Naive thymus-derived CD4-positive, alpha-beta T cell (primary cell): ENCODE measurements at regions of chr16 and their contacts with region 1.

Region 1: GRCh38 chr16:2874912-2875362 is 8.1 kb upstream of the FLYWCH2 start:
- DNase-seq: peak in 8 of 9 donors; percentile 42 to 70 (median 48)
- ATAC-seq: peak; percentile 100
- H3K4me3 ChIP-seq: no peak overlapping the region
- H3K4me3 Mint-ChIP-seq: no peak overlapping the region
- H3K27ac ChIP-seq: no peak overlapping the region
- H3K27ac Mint-ChIP-seq: no peak overlapping the region
- H3K4me1 ChIP-seq: no peaks in the 10 kb centered on the region
- H3K4me1 Mint-ChIP-seq: no peaks in the 10 kb centered on the region
- H3K27me3 ChIP-seq: no peaks in the 10 kb centered on the region
- H3K27me3 Mint-ChIP-seq: peaks cover 0 to 9% (median 0%) of the 10 kb centered on the region in 5 donors

Region 2: DNA sequence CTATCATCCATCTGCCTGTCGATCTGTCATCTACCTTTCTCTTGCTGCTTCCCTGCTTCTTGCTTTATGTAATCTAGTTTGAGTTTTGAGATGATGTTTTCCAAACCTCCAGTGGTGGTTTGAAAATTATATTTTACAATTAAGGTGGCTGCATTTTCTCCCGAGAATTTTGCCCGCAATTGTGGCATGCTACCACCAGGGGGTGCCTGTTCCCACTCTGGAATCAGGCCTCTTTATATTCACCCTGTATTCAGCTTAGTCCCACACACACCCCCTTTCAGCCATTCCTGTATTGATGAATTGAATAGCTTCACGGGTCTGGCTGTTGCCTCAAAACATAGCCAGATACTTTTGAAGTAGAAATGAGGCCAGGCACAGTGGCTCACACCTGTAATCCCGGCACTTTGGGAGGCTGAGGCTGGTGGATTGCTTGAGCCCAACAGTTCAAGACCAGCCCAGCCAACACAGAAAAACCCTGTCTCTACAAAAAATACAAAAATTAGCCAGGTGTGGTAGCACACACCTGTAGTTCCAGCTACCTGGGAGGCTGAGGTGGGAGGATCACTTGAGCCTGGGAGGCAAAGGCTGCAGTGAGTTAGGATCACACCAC is 20.1 kb before region 1 on chr16:
- CTCF ChIA-PET with region 1: no interaction called
- POLR2A ChIA-PET with region 1: no interaction called
- intact Hi-C with region 1: no loop called
- DNase-seq: no peak
- ATAC-seq: no peak
- H3K4me3 ChIP-seq: no peak overlapping the region
- H3K4me3 Mint-ChIP-seq: no peak overlapping the region
- H3K27ac ChIP-seq: no peak overlapping the region
- H3K27ac Mint-ChIP-seq: no peak overlapping the region
- H3K4me1 ChIP-seq: peaks cover 3 to 12% of the 10 kb centered on the region in 2 donors
- H3K4me1 Mint-ChIP-seq: peaks cover 3 to 13% (median 5%) of the 10 kb centered on the region in 7 donors
- H3K27me3 ChIP-seq: peaks cover 0 to 6% of the 10 kb centered on the region in 2 donors
- H3K27me3 Mint-ChIP-seq: peaks cover 0 to 9% (median 5%) of the 10 kb centered on the region in 5 donors

Region 3: DNA sequence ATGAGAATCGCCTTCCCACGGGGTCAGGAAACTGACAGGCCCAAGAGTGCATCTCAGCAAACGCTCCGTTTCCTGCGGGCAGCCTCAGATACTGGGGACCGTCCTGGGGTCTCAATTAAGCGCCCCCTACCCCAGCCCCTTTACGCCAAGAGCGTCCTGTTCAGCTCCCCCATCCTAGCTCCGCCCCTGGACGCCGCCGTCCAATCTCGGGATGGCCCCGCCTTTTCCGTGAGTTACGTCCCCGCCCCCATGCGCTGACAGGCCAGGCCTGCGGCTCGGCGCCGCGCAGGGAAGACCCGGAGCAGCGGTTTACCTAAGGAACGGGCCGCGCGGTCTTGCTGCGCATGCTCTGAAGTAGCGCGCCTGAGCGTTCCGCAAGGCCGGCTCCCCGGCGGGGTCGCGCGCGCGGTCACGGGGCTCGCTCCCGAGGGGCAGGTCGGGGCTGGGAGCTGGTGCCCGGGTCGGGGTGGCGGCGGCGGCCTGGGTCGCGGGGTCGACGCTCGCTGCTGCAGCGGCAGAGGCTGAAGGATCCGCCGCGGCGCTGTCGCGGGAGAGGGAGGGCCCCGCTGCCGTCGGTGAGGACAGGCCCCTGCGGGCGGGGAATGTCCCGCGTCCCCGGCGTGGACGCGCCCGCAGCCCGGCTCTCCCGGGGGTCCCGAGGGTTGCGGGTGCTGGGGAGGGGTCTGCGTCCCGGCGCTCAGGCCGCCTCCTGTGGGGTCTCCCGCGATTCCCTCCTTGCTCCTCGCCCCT is 36.8 kb after region 1 on chr16 and contains the start of gene FLYWCH1:
- CTCF ChIA-PET with region 1: interaction called, 3 read pairs
- POLR2A ChIA-PET with region 1: interaction called, 3 read pairs
- intact Hi-C with region 1: loop called in 1 of 2 experiments (anchors 1 kb)
- DNase-seq: peak; percentile 94 to 99 (median 97)
- ATAC-seq: peak; percentile 99
- H3K4me3 ChIP-seq: peak within 1 kb of the TSS; percentile 85
- H3K4me3 Mint-ChIP-seq: peak within 1 kb of the TSS; percentile 80 to 97 (median 92)
- H3K27ac ChIP-seq: peak within 1 kb of the TSS; percentile 78
- H3K27ac Mint-ChIP-seq: peak within 1 kb of the TSS; percentile 80 to 96 (median 87)
- H3K4me1 ChIP-seq: peaks cover 7 to 8% of the 10 kb centered on the region in 2 donors
- H3K4me1 Mint-ChIP-seq: peaks cover 11 to 39% (median 30%) of the 10 kb centered on the region in 7 donors
- H3K27me3 ChIP-seq: no peaks in the 10 kb centered on the region
- H3K27me3 Mint-ChIP-seq: peaks cover 0 to 10% (median 0%) of the 10 kb centered on the region in 5 donors
- total RNA-seq, gene FLYWCH1: 48.6 to 149 (median 87.0) TPM

Region 4: GRCh38 chr16:2919511-2920255 is 44.7 kb after region 1 on chr16:
- CTCF ChIA-PET with region 1: interaction called, 7 read pairs
- POLR2A ChIA-PET with region 1: interaction called, 3 read pairs
- intact Hi-C with region 1: loop called (anchors 1 kb)
- DNase-seq: peak in 8 of 9 donors; percentile 40 to 74 (median 56)
- ATAC-seq: peak; percentile 88
- H3K4me3 ChIP-seq: no peak overlapping the region
- H3K4me3 Mint-ChIP-seq: peak overlapping the region in 1 of 10 donors; percentile 24
- H3K27ac ChIP-seq: no peak overlapping the region
- H3K27ac Mint-ChIP-seq: peak overlapping the region in 5 of 9 donors; percentile 53 to 76 (median 69)
- H3K4me1 ChIP-seq: no peaks in the 10 kb centered on the region
- H3K4me1 Mint-ChIP-seq: peaks cover 5 to 11% (median 6%) of the 10 kb centered on the region in 7 donors
- H3K27me3 ChIP-seq: no peaks in the 10 kb centered on the region
- H3K27me3 Mint-ChIP-seq: no peaks in the 10 kb centered on the region

Region 5: GRCh38 chr16:2926650-2927646 is 52.0 kb after region 1 on chr16:
- CTCF ChIA-PET with region 1: interaction called, 5 read pairs
- POLR2A ChIA-PET with region 1: no interaction called
- intact Hi-C with region 1: loop called in 1 of 2 experiments (anchors 1 kb)
- DNase-seq: peak; percentile 64 to 91 (median 84)
- ATAC-seq: peak; percentile 100
- H3K4me3 ChIP-seq: no peak overlapping the region
- H3K4me3 Mint-ChIP-seq: peak overlapping the region in 7 of 10 donors; percentile 0 to 48 (median 29)
- H3K27ac ChIP-seq: no peak overlapping the region
- H3K27ac Mint-ChIP-seq: peak overlapping the region in 7 of 9 donors; percentile 0 to 63 (median 48)
- H3K4me1 ChIP-seq: peaks cover 5 to 10% of the 10 kb centered on the region in 2 donors
- H3K4me1 Mint-ChIP-seq: peaks cover 9 to 19% (median 16%) of the 10 kb centered on the region in 7 donors
- H3K27me3 ChIP-seq: no peaks in the 10 kb centered on the region
- H3K27me3 Mint-ChIP-seq: no peaks in the 10 kb centered on the region